Dendritic cell treated with granulocyte-macrophage colony-stimulating factor and Interleukin-4, amounts not matched to agents 40 ng/mL and 50 ng/mL, for 4 days (primary cell): ENCODE measurements at regions of chr10 and their contacts with region 1.

Region 1: GRCh38 chr10:118568327-118568848 is 27.1 kb downstream of the PRLHR start:
- H3K4me3 Mint-ChIP-seq: no peak overlapping the region
- H3K27ac Mint-ChIP-seq: no peak overlapping the region
- H3K4me1 Mint-ChIP-seq: peaks cover 24% of the 10 kb centered on the region
- H3K27me3 Mint-ChIP-seq: peaks cover 14% of the 10 kb centered on the region

Region 2: DNA sequence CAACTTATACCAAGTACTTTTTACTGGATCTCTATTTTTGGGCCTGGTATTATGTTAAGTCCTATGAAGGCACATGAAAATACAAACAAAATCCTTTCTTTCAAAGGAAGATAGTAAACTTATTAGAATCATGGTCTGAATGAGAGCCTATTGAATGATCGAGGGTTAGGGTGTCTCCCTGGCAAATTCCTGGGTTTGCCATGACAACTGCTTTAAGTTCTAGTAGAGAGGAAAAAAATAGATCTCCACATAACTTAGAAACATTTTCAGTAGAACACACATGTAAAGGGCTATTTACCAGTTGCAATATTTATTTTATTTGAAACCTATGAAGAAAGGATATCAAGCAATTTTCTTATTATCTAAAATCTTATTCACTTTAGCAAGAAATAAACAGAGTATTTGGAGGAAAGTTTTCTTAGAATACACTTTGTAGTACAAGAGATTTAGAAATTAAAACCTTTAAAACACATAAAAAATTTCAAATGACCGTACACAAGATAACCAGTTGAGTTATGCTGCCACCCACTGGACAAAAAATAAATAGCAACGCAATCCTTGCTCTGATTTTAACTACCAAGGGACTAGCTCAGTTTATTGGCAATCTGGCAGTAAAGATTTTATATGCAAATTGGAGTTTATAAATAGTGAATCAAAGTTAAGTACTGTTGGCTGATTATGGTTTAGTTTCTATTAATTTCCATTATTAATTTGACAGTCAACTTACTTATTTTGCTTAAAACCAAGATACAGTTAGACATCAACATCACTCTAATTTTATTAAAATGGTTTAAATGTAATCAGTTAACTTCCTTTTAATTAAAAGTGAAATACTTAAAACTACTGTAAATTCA is 152.5 kb after region 1 on chr10:
- intact Hi-C with region 1: loop called (anchors 2 kb)
- H3K4me3 Mint-ChIP-seq: no peak overlapping the region
- H3K27ac Mint-ChIP-seq: no peak overlapping the region
- H3K4me1 Mint-ChIP-seq: peaks cover under 1% of the 10 kb centered on the region
- H3K27me3 Mint-ChIP-seq: no peaks in the 10 kb centered on the region

Region 3: DNA sequence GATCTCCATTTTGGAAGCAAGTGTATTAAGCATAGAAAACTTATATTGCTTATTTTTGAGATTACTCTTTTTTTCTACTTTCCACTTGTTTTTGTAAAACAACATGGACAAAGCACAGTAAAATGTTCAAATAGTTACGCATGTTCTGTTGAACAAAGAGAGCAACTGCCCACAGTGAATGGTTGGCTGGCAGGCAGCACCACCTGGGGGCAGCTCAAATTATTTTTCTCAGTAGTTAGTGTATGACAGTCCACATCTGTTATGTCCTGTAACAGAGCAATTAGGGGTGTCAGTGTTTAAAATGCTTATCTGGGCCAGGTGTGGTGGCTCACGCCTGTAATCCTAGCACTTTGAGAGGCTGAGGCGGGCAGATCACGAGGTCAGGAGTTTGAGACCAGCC is 232.5 kb after region 1 on chr10:
- intact Hi-C with region 1: loop called (anchors 1 kb)
- H3K4me3 Mint-ChIP-seq: no peak overlapping the region
- H3K27ac Mint-ChIP-seq: no peak overlapping the region
- H3K4me1 Mint-ChIP-seq: peaks cover 5% of the 10 kb centered on the region
- H3K27me3 Mint-ChIP-seq: peaks cover 24% of the 10 kb centered on the region

Region 4: DNA sequence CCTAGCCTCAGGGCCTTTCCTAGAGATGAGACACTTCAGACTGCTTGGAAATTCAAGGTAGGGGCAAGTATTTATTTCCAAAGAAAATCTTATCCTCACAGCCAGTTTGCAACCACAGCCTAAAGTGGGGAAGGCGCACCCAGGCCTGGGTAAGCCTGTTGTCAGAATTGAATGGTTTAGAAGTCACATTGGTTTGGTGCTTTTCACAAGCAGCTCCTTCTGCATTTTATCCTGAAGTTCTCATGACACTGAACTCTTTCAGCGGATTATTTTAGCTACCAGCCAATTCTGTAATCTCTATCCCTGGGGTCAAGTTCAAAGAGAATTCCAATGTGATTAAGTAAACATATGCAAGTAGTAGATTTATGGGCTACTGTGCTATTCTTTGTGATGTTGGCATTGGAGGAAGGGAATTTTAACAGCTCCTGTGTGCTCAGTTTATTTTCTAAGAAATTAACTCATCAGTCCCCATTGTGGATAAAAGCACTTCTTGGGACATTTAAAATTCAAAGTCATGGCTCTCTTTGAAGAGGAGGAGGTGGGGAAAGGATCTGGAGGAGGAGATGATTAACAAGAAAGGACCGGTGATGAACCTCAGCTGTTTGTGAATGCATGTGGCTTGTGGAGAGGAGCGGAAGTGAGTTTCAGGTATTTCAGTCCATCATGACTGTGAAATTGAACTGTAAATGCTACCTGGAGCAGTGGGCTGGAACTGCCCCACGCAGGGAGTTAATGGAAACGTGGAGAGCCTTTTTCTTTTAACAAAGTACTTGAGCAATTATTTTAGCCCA is 276.5 kb after region 1 on chr10:
- intact Hi-C with region 1: loop called (anchors 5 kb)
- H3K4me3 Mint-ChIP-seq: no peak overlapping the region
- H3K27ac Mint-ChIP-seq: no peak overlapping the region
- H3K4me1 Mint-ChIP-seq: peaks cover 3% of the 10 kb centered on the region
- H3K27me3 Mint-ChIP-seq: peaks cover 6% of the 10 kb centered on the region

Region 5: DNA sequence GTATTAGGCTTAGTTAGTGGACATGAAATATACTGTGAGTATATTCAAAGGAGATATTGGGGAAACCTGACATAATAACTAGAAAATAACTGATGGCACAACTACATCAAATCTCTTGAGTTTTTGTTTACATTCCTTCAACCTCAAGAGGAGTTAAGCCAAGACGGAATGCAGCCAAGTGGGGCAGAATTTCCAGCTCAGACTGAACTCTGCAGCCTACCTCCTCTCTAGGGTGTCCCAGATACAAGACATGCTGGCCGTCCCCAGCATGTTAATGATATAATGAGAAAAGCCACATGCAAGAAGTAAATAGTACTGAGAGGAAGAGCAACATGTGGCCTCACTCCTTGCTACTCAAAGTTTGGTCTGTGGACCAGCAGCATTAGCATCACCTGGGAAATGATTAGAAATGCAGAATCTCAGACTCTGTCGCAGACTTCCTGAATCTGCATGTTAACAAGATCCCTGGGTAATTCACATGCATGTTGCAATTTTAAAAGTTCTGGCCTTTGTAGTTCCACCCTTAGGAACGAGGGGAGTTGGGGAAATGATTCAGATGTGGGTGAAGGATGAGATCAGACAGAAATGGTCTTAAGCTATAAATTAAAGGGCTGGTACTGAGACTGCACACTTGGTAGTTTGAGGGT is 304.8 kb after region 1 on chr10:
- intact Hi-C with region 1: no loop called
- H3K4me3 Mint-ChIP-seq: no peak overlapping the region
- H3K27ac Mint-ChIP-seq: no peak overlapping the region
- H3K4me1 Mint-ChIP-seq: peaks cover 43% of the 10 kb centered on the region
- H3K27me3 Mint-ChIP-seq: peaks cover 1% of the 10 kb centered on the region